ENCODE measurements at regions of chr3 and their contacts with region 1.

Region 1: DNA sequence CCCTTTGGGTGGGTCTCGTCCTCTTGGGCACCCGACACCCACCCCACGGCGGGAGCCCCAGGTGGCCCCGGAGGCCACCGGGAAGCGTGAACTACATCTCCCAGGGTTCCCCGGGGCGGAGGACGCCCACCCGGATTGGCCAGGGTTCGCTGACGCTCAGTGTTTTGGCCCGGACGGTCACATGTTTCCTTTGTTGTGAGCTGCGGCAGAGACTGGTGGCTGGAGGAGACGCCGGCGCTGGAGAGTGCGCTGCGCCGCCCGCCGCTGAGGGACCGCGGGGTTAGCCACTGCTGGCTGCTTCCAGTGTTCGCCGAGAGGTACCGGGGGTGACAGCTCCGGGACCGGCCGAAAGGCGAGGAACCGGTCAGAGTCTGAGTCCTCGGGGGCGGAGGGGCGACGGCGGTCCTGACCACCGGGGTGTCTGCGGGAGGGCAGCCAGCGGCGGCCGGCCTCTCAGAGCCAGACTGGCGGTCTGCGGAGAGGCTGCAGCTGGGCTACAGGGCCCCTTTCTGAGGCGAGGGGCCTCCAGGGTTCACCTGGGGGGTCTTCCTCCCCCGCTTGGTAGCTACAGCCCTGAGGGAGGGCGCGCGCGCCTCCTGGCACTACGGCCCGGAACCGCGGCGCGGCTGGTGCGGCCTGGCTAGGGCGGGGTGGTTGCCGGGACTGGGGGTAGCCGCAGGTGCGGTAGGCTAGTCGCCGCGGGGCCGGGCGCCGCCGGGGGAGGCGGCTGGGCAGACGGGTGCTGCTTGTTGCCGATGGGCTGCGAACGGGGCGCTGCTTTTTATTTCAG is at the start of gene KLHL24:
- DNase-seq: peak; percentile 80 to 95 (median 86)
- ATAC-seq: peak; percentile 75
- H3K4me3 ChIP-seq: peak within 1 kb of the TSS; percentile 96
- H3K4me3 Mint-ChIP-seq: peak within 1 kb of the TSS; percentile 100
- H3K27ac ChIP-seq: peak within 1 kb of the TSS; percentile 93 to 99
- H3K27ac Mint-ChIP-seq: peak within 1 kb of the TSS; percentile 98
- H3K4me1 ChIP-seq: peaks cover 27% of the 10 kb centered on the region
- H3K4me1 Mint-ChIP-seq: peaks cover 42% of the 10 kb centered on the region
- H3K27me3 ChIP-seq: no peaks in the 10 kb centered on the region
- H3K27me3 Mint-ChIP-seq: no peaks in the 10 kb centered on the region
- CTCF ChIP-seq: no peak
- total RNA-seq, gene KLHL24: 190 to 191 TPM

Region 2: GRCh38 chr3:183468424-183468823 is 167.2 kb before region 1 on chr3:
- CTCF ChIA-PET with region 1: no interaction called
- POLR2A ChIA-PET with region 1: no interaction called
- intact Hi-C with region 1: loop called in 1 of 2 experiments (anchors 2 kb)
- DNase-seq: no peak
- ATAC-seq: no peak
- H3K4me3 ChIP-seq: no peak overlapping the region
- H3K4me3 Mint-ChIP-seq: no peak overlapping the region
- H3K27ac ChIP-seq: no peak overlapping the region
- H3K27ac Mint-ChIP-seq: no peak overlapping the region
- H3K4me1 ChIP-seq: peaks cover 7% of the 10 kb centered on the region
- H3K4me1 Mint-ChIP-seq: peaks cover 5% of the 10 kb centered on the region
- H3K27me3 ChIP-seq: no peaks in the 10 kb centered on the region
- H3K27me3 Mint-ChIP-seq: no peaks in the 10 kb centered on the region
- CTCF ChIP-seq: no peak

Region 3: GRCh38 chr3:183515968-183516851 is 119.4 kb before region 1 on chr3:
- CTCF ChIA-PET with region 1: interaction called, 5 read pairs
- POLR2A ChIA-PET with region 1: interaction called, 22 read pairs
- intact Hi-C with region 1: loop called (anchors 1 to 10 kb)
- DNase-seq: peak; percentile 28 to 89 (median 57)
- ATAC-seq: peak; percentile 71
- H3K4me3 ChIP-seq: no peak overlapping the region
- H3K4me3 Mint-ChIP-seq: peak overlapping the region; percentile 31
- H3K27ac ChIP-seq: peak overlapping the region; percentile 35 to 71
- H3K27ac Mint-ChIP-seq: peak overlapping the region; percentile 89
- H3K4me1 ChIP-seq: peaks cover 64% of the 10 kb centered on the region
- H3K4me1 Mint-ChIP-seq: peaks cover 87% of the 10 kb centered on the region
- H3K27me3 ChIP-seq: no peaks in the 10 kb centered on the region
- H3K27me3 Mint-ChIP-seq: no peaks in the 10 kb centered on the region
- CTCF ChIP-seq: no peak

Region 4: GRCh38 chr3:183591881-183592521 is 43.6 kb before region 1 on chr3:
- CTCF ChIA-PET with region 1: no interaction called
- POLR2A ChIA-PET with region 1: interaction called, 30 read pairs
- intact Hi-C with region 1: no loop called
- DNase-seq: peak in 3 of 14 experiments; percentile 57 to 60 (median 59)
- ATAC-seq: no peak
- H3K4me3 ChIP-seq: peak overlapping the region; percentile 2
- H3K4me3 Mint-ChIP-seq: peak overlapping the region; percentile 81
- H3K27ac ChIP-seq: no peak overlapping the region
- H3K27ac Mint-ChIP-seq: peak overlapping the region; percentile 62
- H3K4me1 ChIP-seq: peaks cover 32% of the 10 kb centered on the region
- H3K4me1 Mint-ChIP-seq: peaks cover 44% of the 10 kb centered on the region
- H3K27me3 ChIP-seq: no peaks in the 10 kb centered on the region
- H3K27me3 Mint-ChIP-seq: no peaks in the 10 kb centered on the region
- CTCF ChIP-seq: peak; percentile 48

Region 5: DNA sequence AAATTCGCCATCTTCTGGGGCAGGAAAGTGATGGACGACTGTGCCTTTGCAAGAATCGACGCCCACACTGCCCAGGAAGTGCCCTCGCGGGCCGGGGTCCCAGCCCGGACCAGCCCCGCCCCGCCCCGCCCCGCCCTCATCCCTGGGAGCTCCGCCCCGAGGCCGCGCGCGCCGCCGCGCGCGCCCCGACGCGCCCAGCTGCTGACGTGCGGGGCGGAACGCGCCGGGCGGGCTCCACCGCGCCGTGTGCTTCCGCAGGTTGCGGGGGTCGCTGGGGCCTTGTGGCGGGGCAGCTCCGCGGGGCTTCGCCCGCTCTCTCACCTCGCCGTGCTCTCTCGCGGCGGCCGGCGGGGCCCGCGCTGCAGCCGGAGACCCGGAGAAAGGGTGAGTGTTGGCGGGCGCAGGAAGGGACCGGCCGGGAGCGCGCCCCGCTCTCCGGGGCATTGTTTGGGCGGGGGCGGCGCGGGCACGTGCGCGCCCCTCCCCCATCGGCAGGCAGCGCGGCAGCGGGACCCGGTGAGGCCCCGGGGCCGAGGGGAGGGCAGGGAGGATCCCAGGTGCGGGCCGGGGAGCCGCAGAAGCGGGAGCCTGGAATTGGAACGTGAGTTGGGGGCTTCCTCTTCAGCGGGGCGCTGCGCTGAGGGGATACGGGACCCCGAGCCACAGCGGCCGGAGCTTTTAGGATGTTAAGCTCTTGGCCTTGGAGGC is 62.1 kb after region 1 on chr3 and contains the start of gene YEATS2:
- CTCF ChIA-PET with region 1: no interaction called
- POLR2A ChIA-PET with region 1: interaction called, 104 read pairs
- intact Hi-C with region 1: loop called (anchors 1 to 2 kb)
- DNase-seq: peak; percentile 45 to 86 (median 62)
- ATAC-seq: peak; percentile 83
- H3K4me3 ChIP-seq: peak within 1 kb of the TSS; percentile 91
- H3K4me3 Mint-ChIP-seq: peak within 1 kb of the TSS; percentile 99
- H3K27ac ChIP-seq: peak within 1 kb of the TSS; percentile 59 to 61
- H3K27ac Mint-ChIP-seq: peak within 1 kb of the TSS; percentile 74
- H3K4me1 ChIP-seq: peaks cover 19% of the 10 kb centered on the region
- H3K4me1 Mint-ChIP-seq: peaks cover 46% of the 10 kb centered on the region
- H3K27me3 ChIP-seq: no peaks in the 10 kb centered on the region
- H3K27me3 Mint-ChIP-seq: no peaks in the 10 kb centered on the region
- CTCF ChIP-seq: no peak
- total RNA-seq, gene YEATS2: 14.6 to 15.9 TPM

Region 6: DNA sequence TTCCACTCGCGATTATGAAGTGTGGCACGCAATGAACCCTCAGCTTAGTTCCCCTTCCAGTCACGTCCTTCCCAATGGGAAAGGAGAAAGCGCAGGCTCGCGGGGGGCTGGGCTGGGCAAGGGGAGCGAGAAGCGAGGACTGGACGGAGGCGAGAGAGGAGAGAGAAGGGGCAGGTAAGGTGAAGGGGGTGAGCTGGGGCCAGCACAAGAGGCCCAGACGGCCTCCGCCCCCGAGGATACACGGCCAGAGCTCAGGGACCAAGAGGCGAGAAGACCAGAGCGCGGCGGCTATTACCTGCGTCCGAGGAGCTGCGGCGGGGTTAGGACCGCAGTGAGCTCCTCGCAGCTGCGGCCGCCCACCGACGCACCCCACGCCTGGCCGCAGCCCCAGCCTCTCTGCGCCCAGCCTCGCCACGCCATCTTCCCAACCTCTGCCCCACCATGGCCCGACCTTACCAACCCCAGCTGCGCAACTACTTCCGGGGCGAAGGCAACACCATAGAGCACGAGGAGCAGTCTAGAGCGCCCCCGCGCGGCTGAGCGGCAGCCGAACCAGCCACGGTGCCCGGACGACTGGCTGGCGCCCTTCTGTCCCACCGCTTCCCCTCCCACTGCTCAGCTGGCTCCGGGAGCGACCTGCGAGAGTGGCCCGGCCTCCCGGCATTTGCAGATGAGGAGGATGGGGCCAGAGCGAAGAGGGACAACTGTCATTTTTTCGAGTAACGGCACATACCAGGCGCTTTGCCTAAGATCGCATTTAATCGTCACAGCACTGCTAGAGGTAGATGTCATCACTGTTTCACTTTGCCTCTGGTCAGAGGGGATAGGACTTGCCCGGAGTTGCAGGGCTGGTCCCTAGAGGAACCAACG is 249.0 kb after region 1 on chr3 and contains the start of gene PARL:
- CTCF ChIA-PET with region 1: interaction called, 4 read pairs
- POLR2A ChIA-PET with region 1: no interaction called
- intact Hi-C with region 1: loop called in 1 of 2 experiments (anchors 10 kb)
- DNase-seq: peak; percentile 93 to 98 (median 96)
- ATAC-seq: peak; percentile 100
- H3K4me3 ChIP-seq: peak within 1 kb of the TSS; percentile 97
- H3K4me3 Mint-ChIP-seq: peak within 1 kb of the TSS; percentile 97
- H3K27ac ChIP-seq: peak within 1 kb of the TSS; percentile 66
- H3K27ac Mint-ChIP-seq: peak within 1 kb of the TSS; percentile 82
- H3K4me1 ChIP-seq: peaks cover 37% of the 10 kb centered on the region
- H3K4me1 Mint-ChIP-seq: peaks cover 36% of the 10 kb centered on the region
- H3K27me3 ChIP-seq: no peaks in the 10 kb centered on the region
- H3K27me3 Mint-ChIP-seq: no peaks in the 10 kb centered on the region
- CTCF ChIP-seq: peak; percentile 91
- total RNA-seq, gene PARL: 36.9 to 40.0 TPM